Naive thymus-derived CD4-positive, alpha-beta T cell (primary cell): ENCODE measurements at regions of chr4 and their contacts with region 1.

Region 1: GRCh38 chr4:112523764-112524505 is 8.0 kb upstream of the NEUROG2 start:
- DNase-seq: peak; percentile 52 to 83 (median 71)
- ATAC-seq: peak; percentile 90
- H3K4me3 ChIP-seq: peak overlapping the region; percentile 69
- H3K4me3 Mint-ChIP-seq: peak overlapping the region; percentile 82 to 96 (median 90)
- H3K27ac ChIP-seq: no peak overlapping the region
- H3K27ac Mint-ChIP-seq: peak overlapping the region in 2 of 9 donors; percentile 11 to 62
- H3K4me1 ChIP-seq: peaks cover 7 to 22% of the 10 kb centered on the region in 2 donors
- H3K4me1 Mint-ChIP-seq: peaks cover 15 to 44% (median 33%) of the 10 kb centered on the region in 7 donors
- H3K27me3 ChIP-seq: peaks cover 16 to 40% of the 10 kb centered on the region in 2 donors
- H3K27me3 Mint-ChIP-seq: peaks cover 52 to 84% (median 63%) of the 10 kb centered on the region in 5 donors

Region 2: GRCh38 chr4:110622841-110623717 is 1900.9 kb before region 1 on chr4 and contains the start of gene PITX2:
- CTCF ChIA-PET with region 1: no interaction called
- POLR2A ChIA-PET with region 1: no interaction called
- intact Hi-C with region 1: loop called in 1 of 2 experiments (anchors 5 kb)
- DNase-seq: no peak
- ATAC-seq: peak; percentile 44
- H3K4me3 ChIP-seq: no peak within 1 kb of the TSS
- H3K4me3 Mint-ChIP-seq: peak within 1 kb of the TSS; percentile 61 to 83 (median 72)
- H3K27ac ChIP-seq: no peak within 1 kb of the TSS
- H3K27ac Mint-ChIP-seq: peak within 1 kb of the TSS in 1 of 9 donors; percentile 85
- H3K4me1 ChIP-seq: peaks cover 0 to 12% of the 10 kb centered on the region in 2 donors
- H3K4me1 Mint-ChIP-seq: peaks cover 13 to 54% (median 39%) of the 10 kb centered on the region in 7 donors
- H3K27me3 ChIP-seq: peaks cover 14 to 48% of the 10 kb centered on the region in 2 donors
- H3K27me3 Mint-ChIP-seq: peaks cover 92 to 99% (median 97%) of the 10 kb centered on the region in 5 donors
- total RNA-seq, gene PITX2: not detected

Region 3: DNA sequence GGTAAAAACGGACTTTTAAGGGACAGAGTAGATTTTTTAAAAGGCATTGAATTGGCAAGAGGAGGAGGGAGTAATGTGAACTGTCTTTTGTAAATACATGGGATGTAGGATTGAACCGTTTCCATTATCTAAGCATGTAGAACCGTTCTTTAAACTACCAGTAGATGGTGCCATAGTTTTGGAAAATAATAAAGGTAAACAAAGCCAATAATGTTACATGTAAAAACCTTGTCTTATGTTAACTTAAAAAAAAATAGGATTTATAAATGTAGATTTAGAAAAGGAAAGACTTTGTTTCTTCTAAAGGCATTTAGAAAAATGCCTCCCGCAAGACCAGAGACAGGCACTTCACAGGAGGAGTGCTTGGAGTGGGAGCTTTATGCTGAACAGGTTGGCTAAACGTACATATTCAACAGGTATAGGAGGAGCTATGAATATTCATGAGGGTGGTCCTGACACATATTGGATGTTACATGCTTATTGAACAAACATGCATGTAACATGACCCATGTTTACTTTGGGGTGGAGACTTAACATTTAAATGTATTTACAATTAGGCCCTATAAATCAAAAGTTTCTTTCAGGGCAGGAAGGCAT is 424.1 kb before region 1 on chr4:
- CTCF ChIA-PET with region 1: interaction called, 9 read pairs
- POLR2A ChIA-PET with region 1: no interaction called
- intact Hi-C with region 1: loop called (anchors 1 kb)
- DNase-seq: peak in 7 of 9 donors; percentile 15 to 58 (median 41)
- ATAC-seq: peak; percentile 72
- H3K4me3 ChIP-seq: no peak overlapping the region
- H3K4me3 Mint-ChIP-seq: no peak overlapping the region
- H3K27ac ChIP-seq: no peak overlapping the region
- H3K27ac Mint-ChIP-seq: peak overlapping the region in 1 of 9 donors; percentile 25
- H3K4me1 ChIP-seq: no peaks in the 10 kb centered on the region
- H3K4me1 Mint-ChIP-seq: peaks cover 0 to 13% (median 0%) of the 10 kb centered on the region in 7 donors
- H3K27me3 ChIP-seq: no peaks in the 10 kb centered on the region
- H3K27me3 Mint-ChIP-seq: peaks cover 4 to 29% (median 10%) of the 10 kb centered on the region in 5 donors

Region 4: DNA sequence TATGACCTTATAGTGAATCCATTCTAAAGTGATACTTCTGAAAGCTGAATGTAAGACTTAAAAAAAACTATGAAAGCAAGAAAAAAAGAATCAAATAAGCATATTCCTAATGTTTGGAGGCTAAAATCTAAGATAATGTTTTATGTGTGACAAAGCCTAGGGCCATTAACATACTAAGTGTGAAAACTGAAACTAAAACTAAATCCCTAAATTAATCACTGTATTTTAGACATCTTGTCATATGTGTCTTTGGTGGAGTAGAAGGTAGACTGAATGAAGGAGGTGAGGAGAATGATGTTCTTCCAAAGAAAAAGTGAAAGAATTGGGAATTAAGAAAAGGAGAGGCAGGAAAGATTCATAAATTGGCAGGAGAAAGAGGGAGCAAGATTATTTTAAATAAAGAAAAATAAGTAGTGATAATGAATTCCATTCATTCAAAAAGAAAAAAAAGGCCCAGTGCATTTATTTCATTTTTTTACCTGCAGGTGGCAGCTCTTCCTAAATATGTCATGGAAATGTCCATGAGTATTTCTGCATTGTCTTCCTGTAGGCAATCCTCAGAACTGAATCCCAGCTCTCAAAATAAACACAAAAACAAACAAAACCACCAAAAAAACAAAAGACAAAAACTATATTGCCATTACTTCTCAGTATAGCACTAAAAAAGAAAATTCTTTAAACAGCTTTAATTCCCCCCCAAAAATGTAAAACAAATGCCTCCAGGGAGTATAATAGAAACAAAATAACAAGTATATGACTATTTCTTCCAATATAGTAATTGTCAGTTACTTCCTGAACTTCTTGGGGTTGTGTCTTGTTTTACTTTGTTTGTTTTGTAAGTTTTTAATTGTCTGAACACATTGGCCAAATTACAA is 309.3 kb before region 1 on chr4:
- CTCF ChIA-PET with region 1: interaction called, 6 read pairs
- POLR2A ChIA-PET with region 1: no interaction called
- intact Hi-C with region 1: loop called (anchors 1 kb)
- DNase-seq: peak in 3 of 9 donors; percentile 16 to 26 (median 20)
- ATAC-seq: no peak
- H3K4me3 ChIP-seq: no peak overlapping the region
- H3K4me3 Mint-ChIP-seq: no peak overlapping the region
- H3K27ac ChIP-seq: no peak overlapping the region
- H3K27ac Mint-ChIP-seq: peak overlapping the region in 2 of 9 donors; percentile 5 to 7
- H3K4me1 ChIP-seq: no peaks in the 10 kb centered on the region
- H3K4me1 Mint-ChIP-seq: peaks cover 0 to 9% (median 4%) of the 10 kb centered on the region in 7 donors
- H3K27me3 ChIP-seq: no peaks in the 10 kb centered on the region
- H3K27me3 Mint-ChIP-seq: peaks cover 0 to 6% (median 0%) of the 10 kb centered on the region in 5 donors

Region 5: GRCh38 chr4:112321776-112322684 is 201.9 kb before region 1 on chr4:
- CTCF ChIA-PET with region 1: interaction called, 14 read pairs
- POLR2A ChIA-PET with region 1: no interaction called
- intact Hi-C with region 1: loop called (anchors 1 kb)
- DNase-seq: peak; percentile 44 to 74 (median 71)
- ATAC-seq: peak; percentile 96
- H3K4me3 ChIP-seq: no peak overlapping the region
- H3K4me3 Mint-ChIP-seq: peak overlapping the region in 7 of 10 donors; percentile 27 to 75 (median 62)
- H3K27ac ChIP-seq: no peak overlapping the region
- H3K27ac Mint-ChIP-seq: peak overlapping the region in 3 of 9 donors; percentile 15 to 59 (median 38)
- H3K4me1 ChIP-seq: no peaks in the 10 kb centered on the region
- H3K4me1 Mint-ChIP-seq: peaks cover 10 to 34% (median 14%) of the 10 kb centered on the region in 7 donors
- H3K27me3 ChIP-seq: no peaks in the 10 kb centered on the region
- H3K27me3 Mint-ChIP-seq: no peaks in the 10 kb centered on the region

Region 6: DNA sequence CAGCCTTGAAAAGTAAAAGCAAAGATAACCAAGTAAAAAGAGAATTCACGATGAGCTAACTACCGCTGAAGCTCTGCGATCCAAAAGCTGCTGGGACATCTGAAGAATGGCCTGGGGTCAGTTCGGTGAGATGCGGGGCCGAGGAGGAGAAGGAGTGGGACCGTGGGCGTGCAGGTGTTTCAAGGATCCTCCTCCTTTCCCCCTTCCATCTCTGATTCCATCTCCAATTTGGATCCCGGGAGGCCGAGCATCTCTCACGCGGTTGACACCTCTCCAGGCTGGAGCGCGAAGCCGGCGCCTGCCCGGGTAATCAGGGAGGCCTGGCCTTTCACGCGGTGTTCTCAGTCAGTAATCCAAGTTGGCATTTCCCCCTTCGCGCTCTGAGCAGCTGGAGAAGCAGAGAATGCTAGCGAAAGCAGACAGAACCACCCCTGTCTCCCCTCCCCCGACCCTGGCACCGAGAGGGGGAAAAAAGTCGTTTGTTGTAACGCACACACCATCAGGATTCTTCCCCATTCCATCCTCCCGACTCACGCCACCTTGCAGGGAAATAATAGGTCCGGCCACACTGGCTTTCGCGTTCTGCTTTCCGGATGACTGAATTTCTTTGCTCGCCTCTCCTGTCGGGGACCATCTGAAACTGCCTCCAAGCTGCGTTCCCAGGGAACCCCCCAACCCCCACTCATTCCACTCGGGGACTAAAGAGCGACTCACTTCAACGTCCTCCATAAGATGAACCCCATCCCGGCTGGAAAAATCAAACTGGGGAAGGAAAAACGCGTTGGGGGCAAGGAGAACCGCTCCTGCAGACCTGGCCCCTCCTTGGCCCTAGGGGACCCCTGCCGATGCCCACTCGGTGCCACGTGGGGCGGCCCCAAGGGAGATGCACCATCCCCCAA is 14.4 kb before region 1 on chr4:
- CTCF ChIA-PET with region 1: interaction called, 3 read pairs
- POLR2A ChIA-PET with region 1: interaction called, 3 read pairs
- intact Hi-C with region 1: loop called in 1 of 2 experiments (anchors 2 kb)
- DNase-seq: no peak
- ATAC-seq: no peak
- H3K4me3 ChIP-seq: no peak overlapping the region
- H3K4me3 Mint-ChIP-seq: peak overlapping the region; percentile 54 to 85 (median 68)
- H3K27ac ChIP-seq: no peak overlapping the region
- H3K27ac Mint-ChIP-seq: peak overlapping the region in 1 of 9 donors; percentile 56
- H3K4me1 ChIP-seq: peaks cover 9 to 27% of the 10 kb centered on the region in 2 donors
- H3K4me1 Mint-ChIP-seq: peaks cover 23 to 43% (median 38%) of the 10 kb centered on the region in 7 donors
- H3K27me3 ChIP-seq: peaks cover 10 to 55% of the 10 kb centered on the region in 2 donors
- H3K27me3 Mint-ChIP-seq: peaks cover 85 to 95% (median 89%) of the 10 kb centered on the region in 5 donors

Region 7: DNA sequence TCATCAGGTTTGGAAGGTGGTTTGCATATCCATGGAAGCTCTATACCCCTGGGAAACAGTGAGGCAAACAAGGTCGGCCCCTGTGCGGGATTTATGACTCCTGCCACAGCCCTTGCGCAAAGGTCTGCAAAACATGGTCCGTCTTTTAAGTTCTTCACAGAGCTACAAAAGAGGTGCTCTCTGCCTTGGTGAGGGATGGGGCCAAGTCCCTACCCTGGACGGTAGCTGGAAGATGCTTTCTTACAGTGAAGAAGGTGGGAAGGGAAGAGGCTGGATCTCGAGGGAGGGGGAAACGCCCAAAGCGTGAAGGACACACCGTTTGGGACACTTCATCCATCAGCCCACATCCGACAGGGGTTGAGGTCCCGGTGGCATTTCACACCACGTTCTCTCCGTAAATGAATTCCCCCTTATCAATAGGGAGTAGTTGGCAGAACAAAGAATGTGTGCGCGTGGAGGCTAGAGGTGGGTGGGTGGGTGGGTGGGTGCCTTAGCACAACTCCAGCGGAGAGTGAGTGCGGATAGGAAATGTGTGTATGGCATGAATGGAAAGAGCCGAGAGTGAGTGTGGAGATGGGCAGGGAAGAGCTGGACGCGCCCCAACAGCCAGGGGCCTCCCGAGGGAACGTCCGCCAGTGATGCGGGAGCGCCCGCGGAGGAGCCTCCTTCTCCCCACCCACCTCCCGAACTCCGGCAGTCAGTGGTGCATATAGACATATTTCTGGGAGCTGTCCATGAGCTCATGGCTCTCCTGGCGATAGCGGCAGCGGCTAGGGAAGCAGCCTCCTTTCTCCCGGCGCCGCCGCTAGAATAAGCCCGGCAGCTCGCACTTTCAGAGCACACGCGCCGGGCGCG is 181.3 kb after region 1 on chr4:
- CTCF ChIA-PET with region 1: no interaction called
- POLR2A ChIA-PET with region 1: no interaction called
- intact Hi-C with region 1: loop called (anchors 5 to 10 kb)
- DNase-seq: peak in 2 of 9 donors; percentile 2
- ATAC-seq: no peak
- H3K4me3 ChIP-seq: peak overlapping the region; percentile 31
- H3K4me3 Mint-ChIP-seq: peak overlapping the region; percentile 71 to 90 (median 84)
- H3K27ac ChIP-seq: no peak overlapping the region
- H3K27ac Mint-ChIP-seq: peak overlapping the region in 1 of 9 donors; percentile 46
- H3K4me1 ChIP-seq: peaks cover 5% of the 10 kb centered on the region in 2 donors
- H3K4me1 Mint-ChIP-seq: peaks cover 14 to 21% (median 18%) of the 10 kb centered on the region in 7 donors
- H3K27me3 ChIP-seq: peaks cover 0 to 17% of the 10 kb centered on the region in 2 donors
- H3K27me3 Mint-ChIP-seq: peaks cover 58 to 68% (median 60%) of the 10 kb centered on the region in 5 donors